ENCODE measurements at regions of chr11 and their contacts with region 1.

Region 1: DNA sequence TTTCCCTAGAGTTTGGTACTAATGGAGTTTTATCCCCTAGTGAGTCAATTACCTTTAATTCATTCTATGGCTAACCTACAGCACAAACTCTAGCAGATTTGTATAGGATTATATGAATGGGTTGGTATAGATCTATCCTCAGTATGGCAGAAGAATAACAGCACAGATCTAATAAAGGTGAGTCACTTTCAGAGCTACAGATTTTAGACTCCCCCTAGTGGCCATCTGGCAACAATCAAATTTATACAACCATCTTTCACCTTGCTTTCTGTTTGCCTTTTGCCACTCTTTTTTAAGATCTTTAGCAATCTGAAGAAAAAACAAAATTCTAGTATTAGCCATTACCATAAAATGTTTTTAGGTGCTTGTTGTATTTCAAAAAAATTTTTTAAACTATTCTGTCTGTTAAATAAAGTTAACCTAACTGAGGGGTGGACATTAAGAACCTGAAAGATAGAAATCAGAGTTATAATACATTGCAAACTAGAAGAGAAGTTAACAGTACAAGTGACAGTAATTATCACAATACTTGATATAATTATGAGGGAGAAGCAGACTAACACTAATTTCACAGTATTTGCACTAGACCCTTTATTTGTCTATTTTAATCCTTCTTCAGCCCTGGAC is 25.8 kb downstream of the DDIAS start:
- DNase-seq: peak; percentile 84
- H3K4me3 ChIP-seq: no peak overlapping the region
- H3K27ac ChIP-seq: peak overlapping the region; percentile 64
- H3K4me1 ChIP-seq: peaks cover 74% of the 10 kb centered on the region
- CTCF ChIP-seq: peak; percentile 99

Region 2: DNA sequence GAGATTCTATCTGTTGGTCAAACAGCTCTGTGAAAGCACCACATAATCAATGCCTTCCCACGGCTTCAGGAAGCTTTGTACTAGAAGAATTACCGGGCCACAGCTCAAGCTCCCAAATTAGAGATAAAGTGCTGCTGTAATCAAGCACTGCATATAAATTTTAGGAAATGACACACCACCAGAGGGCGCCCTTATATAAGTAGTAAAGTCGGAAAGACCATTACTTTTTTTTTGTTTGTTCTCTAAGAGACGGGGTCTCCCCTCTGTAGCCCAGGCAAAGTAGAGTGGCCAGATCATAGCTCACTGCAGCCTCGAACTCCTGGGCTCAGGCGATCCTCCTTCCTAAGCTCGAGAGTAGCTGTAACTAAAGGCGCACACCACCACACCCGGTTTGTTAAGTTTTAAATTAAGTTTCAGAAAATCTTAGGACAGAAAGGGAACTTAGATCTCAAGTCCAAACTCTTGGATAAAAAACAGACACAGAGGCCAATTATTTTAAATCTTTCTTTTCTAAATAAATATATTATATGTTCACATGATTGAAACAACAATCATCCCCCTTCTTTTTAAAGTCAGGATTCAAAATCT is 59.8 kb before region 1 on chr11:
- CTCF ChIA-PET with region 1: no interaction called
- POLR2A ChIA-PET with region 1: no interaction called
- intact Hi-C with region 1: no loop called
- DNase-seq: peak; percentile 92
- H3K4me3 ChIP-seq: no peak overlapping the region
- H3K27ac ChIP-seq: no peak overlapping the region
- H3K4me1 ChIP-seq: peaks cover 9% of the 10 kb centered on the region
- CTCF ChIP-seq: peak; percentile 93

Region 3: GRCh38 chr11:82945682-82946081 is 18.3 kb after region 1 on chr11:
- CTCF ChIA-PET with region 1: no interaction called
- POLR2A ChIA-PET with region 1: interaction called, 81 read pairs
- intact Hi-C with region 1: no loop called
- DNase-seq: no peak
- H3K4me3 ChIP-seq: no peak overlapping the region
- H3K27ac ChIP-seq: no peak overlapping the region
- H3K4me1 ChIP-seq: peaks cover 16% of the 10 kb centered on the region
- CTCF ChIP-seq: no peak

Region 4: DNA sequence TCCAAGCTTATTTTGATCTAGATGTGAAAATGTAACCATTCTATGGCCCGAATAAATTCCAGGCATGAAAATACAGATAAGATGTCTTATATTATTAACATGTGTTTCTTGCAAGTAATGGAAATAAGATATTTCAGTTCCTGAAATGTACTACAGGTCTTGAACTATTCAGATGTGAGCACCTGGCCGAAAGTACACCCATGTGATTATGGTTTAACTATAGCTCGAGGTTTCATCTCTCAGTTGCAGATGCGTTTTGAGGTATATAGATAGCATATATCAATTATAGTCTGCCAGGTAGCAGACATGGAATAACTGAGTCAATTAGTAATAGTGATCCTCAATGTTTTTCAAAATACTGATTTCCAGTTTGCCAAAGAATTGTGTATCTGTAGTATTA is 42.4 kb after region 1 on chr11:
- CTCF ChIA-PET with region 1: no interaction called
- POLR2A ChIA-PET with region 1: interaction called, 18 read pairs
- intact Hi-C with region 1: loop called (anchors 1 kb)
- DNase-seq: peak; percentile 94
- H3K4me3 ChIP-seq: peak overlapping the region; percentile 33
- H3K27ac ChIP-seq: peak overlapping the region; percentile 98
- H3K4me1 ChIP-seq: peaks cover 88% of the 10 kb centered on the region
- CTCF ChIP-seq: no peak

Region 5: GRCh38 chr11:83071567-83072349 is 144.4 kb after region 1 on chr11 and contains the start of gene RAB30:
- CTCF ChIA-PET with region 1: no interaction called
- POLR2A ChIA-PET with region 1: interaction called, 19 read pairs
- intact Hi-C with region 1: no loop called
- DNase-seq: peak; percentile 99
- H3K4me3 ChIP-seq: peak within 1 kb of the TSS; percentile 86
- H3K27ac ChIP-seq: peak within 1 kb of the TSS; percentile 70
- H3K4me1 ChIP-seq: peaks cover 40% of the 10 kb centered on the region
- CTCF ChIP-seq: no peak
- total RNA-seq, gene RAB30: 27.1 and 33.3 TPM in 2 replicates

Measured in OCI-LY7 (cell line).